Endothelial cell of umbilical vein (primary cell): ENCODE measurements at regions of chr5 and their contacts with region 1.

Region 1: DNA sequence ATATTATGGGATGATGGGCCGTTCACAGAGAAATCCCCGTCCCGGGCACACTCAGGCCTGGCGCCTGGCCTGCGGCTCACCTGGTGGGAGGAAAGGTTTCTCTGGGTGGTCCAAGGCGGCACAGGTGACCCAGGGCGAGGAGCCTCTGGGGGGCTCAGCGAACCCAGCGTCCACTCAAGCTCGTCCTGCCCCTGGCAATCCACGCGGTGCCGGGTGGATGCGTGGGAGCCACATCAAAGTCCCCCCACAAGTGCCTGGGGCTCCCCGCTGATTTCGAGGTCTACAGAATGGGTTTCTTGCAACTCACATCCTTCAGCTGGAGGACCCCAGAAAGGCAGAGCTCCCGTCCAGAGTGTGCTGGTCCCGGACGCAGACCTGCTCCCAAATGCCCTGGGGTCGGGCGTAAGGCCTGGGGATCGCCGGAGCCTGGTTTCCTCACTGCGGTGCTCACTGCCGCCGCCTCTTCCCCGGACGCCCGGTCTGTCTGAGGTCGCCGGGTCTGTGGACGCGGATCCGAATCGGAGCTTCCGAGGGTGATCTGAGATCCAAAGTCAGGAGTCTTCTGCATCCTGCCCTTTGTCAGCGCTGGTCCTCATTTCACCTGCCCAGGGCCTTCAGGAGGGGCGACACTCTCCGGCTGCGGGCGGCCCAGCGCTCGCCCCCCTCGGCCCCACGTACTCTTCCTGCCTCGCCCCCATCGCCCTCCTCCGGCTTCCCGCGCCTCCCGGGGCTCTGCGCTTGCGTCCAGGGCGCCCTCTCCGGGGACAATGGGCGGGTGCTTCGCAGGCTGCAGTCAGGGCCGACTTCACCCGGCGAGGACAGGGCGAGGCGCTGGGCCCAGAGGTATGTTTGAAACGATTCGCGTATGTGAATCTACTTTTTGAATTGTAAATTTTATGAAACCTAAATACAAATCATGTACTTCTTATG is 20.0 kb upstream of the RUFY1 start:
- DNase-seq: peak; percentile 75
- H3K4me3 ChIP-seq: peak overlapping the region in 2 of 3 experiments; percentile 24 to 47
- H3K27ac ChIP-seq: no peak overlapping the region
- H3K4me1 ChIP-seq: no peaks in the 10 kb centered on the region
- H3K27me3 ChIP-seq: no peaks in the 10 kb centered on the region
- CTCF ChIP-seq: peak in 1 of 2 donors; percentile 39
- POLR2A ChIP-seq: no peak

Region 2: DNA sequence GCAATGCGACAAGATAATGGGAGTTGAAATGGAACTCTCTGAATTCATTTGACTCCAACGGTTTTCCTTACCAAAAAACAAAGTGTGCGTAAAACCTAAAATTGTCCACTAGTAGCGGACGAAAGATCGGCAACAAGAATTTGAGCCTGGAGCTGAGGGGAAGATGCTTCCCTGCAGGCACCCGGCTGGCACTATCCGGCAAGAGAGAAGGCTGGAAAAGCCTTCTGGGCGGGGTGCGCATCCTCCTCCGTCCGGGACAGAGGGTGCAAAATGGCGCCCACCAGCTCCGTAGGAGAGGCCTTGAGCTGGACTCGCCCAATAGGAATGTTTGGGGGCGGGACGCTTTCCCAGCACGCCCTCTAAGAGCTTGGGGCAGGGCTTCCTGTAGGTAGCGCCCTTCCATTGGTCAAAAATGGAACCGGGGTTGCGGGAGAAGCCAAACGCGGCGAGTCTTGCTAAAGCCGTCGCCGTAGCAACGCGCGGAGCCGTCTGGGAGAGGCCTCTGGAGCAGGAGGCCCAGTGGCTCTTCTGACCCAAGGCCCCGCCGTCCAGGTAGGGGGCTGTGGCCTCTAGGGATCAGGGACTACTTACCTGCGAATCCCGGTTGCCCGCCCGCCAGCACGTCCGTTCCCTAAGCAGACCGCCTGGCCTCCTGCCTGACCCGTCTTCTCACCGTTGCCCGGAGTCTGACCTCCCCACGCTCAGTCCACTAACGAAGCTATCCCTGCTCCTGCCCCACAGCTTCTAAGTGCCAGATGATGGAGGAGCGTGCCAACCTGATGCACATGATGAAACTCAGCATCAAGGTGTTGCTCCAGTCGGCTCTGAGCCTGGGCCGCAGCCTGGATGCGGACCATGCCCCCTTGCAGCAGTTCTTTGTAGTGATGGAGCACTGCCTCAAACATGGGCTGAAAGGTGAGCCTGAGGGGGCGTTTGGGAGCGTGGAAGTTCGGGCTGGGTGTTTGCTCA is 29.2 kb after region 1 on chr5:
- CTCF ChIA-PET with region 1: no interaction called
- POLR2A ChIA-PET with region 1: no interaction called
- dilution Hi-C with region 1: no loop called
- intact Hi-C with region 1: loop called (anchors 1 kb)
- DNase-seq: peak; percentile 98
- H3K4me3 ChIP-seq: peak overlapping the region; percentile 22 to 83 (median 48)
- H3K27ac ChIP-seq: peak overlapping the region; percentile 56
- H3K4me1 ChIP-seq: peaks cover 13% of the 10 kb centered on the region
- H3K27me3 ChIP-seq: no peaks in the 10 kb centered on the region
- CTCF ChIP-seq: no peak
- POLR2A ChIP-seq: peak; percentile 90